HEK293 (cell line): ENCODE measurements at regions of chr1 and their contacts with region 1.

Region 1: GRCh38 chr1:204506961-204507387 is 9.2 kb upstream of the MDM4 start:
- H3K4me3 ChIP-seq: peak overlapping the region; percentile 58
- H3K27ac ChIP-seq: peak overlapping the region; percentile 78
- H3K4me1 ChIP-seq: no peaks in the 10 kb centered on the region
- CTCF ChIP-seq: no peak

Region 2: DNA sequence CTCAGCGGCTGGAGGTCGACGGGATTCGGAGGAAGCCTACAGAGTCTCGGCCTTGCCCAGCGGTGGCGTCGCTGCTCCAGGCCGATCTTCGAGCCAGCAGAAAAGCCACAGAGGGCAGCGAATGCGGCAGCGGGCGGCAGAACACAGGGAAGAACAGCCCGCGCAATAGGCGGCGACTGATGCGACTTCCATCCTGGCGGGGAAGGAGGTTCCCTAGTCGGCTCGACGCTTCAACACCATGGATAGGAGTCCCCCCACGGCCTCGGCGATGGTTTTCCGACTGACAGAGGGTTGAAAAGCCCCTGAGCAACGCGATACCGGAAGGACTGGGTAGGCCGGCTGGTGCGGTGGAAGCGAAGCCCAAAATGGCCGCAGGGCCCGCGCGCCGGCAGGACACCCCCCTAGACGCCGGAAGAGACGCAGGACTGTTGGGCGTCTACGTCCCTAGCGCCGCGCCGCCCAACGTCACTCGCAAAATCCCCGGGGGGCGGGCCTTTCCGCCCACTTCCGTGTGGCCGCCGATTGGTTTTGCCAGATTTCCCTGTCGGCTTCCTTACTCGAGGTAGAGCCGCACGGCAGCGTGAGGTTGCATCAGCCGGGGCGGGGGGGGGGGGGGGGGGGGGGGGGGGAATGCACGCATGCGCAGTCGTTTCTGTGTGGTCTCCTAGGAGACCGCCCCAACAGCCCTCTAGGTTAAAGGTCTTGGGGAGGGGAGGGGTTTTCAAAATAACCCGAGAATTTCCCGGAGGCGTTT is 95.3 kb before region 1 on chr1 and contains the start of gene PPP1R15B:
- CTCF ChIA-PET with region 1: interaction called, 10 read pairs
- POLR2A ChIA-PET with region 1: interaction called, 4 read pairs
- H3K4me3 ChIP-seq: peak within 1 kb of the TSS; percentile 62
- H3K27ac ChIP-seq: peak within 1 kb of the TSS; percentile 90
- H3K4me1 ChIP-seq: no peaks in the 10 kb centered on the region; the same call in 1 of the 2 replicates
- CTCF ChIP-seq: no peak

Region 3: DNA sequence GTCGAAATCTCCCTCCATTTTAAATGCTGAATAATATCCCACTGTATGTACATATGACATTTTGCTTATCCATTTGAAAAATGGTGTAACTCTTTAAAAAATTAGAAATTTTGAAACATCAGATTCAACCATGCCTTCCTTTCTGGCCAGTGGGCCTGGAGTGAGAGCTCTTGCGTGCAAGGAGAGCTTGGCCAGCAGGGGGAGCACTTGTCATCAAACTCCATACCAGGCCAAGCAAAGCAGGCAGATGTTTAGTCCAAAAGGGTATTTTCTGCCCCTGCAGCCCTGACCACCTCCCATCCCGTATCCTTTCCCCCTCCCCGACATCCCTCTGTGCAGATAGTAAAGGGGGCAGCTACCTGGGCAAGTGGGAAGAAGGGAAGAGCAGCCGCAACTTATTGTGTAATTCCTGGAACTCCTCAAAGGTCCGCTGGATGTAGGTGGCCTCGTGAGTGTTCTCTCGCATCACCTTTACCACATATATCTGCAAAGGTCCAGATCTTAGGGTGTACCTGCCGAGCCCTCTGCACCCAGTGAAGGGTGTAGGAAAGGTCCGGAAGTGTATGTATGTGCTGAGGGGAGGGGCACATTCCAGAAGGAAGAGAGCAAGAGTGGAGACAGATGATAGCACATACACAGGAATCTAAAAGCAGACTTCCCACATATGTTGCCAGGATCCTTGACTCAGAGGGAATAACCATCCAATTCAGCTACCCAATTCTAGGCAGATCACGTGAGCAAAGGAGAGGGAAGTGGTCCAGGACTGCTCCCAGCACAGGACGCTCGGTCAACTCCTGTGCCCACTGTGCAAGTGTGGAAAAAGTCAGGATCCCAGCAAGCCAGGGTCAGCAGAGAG is 75.4 kb before region 1 on chr1:
- CTCF ChIA-PET with region 1: interaction called, 147 read pairs
- POLR2A ChIA-PET with region 1: no interaction called
- H3K4me3 ChIP-seq: no peak overlapping the region
- H3K27ac ChIP-seq: no peak overlapping the region
- H3K4me1 ChIP-seq: no peaks in the 10 kb centered on the region
- CTCF ChIP-seq: peak; percentile 50; the same call in 1 of the 2 replicates

Region 4: DNA sequence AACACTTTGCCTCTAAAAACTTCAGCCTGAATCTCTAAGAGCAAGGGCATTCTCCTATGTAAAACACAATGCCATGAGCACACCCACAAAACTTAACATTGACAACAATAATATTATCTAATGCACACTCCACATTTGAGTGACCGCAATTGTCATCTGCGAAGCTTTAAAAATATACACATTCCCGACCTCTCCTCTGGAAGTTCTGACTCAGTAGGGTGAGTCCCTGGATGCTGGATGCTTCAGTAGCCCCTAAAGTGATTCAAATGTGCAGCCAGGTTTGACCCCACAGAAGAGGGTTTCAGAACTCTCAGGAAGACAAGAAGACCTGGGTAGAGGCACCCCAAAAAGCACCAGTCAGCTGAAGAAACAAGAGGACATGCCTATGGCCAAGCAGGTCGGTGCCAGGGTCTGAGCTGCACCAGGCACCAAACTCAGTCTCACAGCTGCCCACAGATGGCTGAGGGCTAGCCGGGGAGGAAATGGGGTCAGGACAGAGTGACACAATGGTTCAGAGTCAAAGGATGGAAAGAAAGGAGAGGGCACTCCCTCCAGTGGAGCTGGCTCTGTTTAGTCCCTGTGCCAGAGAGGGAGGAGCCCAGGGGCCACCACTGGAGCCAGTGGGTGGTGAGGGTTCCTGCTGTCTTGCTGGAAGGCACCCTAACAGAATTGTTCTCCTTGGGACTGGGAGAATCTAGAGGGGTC is 29.8 kb before region 1 on chr1:
- CTCF ChIA-PET with region 1: interaction called, 22 read pairs
- POLR2A ChIA-PET with region 1: interaction called, 3 read pairs
- H3K4me3 ChIP-seq: no peak overlapping the region
- H3K27ac ChIP-seq: no peak overlapping the region
- H3K4me1 ChIP-seq: no peaks in the 10 kb centered on the region; the same call in 1 of the 2 replicates
- CTCF ChIP-seq: no peak